KBM-7 (cell line): ENCODE measurements at regions of chr3 and their contacts with region 1.

Region 1: DNA sequence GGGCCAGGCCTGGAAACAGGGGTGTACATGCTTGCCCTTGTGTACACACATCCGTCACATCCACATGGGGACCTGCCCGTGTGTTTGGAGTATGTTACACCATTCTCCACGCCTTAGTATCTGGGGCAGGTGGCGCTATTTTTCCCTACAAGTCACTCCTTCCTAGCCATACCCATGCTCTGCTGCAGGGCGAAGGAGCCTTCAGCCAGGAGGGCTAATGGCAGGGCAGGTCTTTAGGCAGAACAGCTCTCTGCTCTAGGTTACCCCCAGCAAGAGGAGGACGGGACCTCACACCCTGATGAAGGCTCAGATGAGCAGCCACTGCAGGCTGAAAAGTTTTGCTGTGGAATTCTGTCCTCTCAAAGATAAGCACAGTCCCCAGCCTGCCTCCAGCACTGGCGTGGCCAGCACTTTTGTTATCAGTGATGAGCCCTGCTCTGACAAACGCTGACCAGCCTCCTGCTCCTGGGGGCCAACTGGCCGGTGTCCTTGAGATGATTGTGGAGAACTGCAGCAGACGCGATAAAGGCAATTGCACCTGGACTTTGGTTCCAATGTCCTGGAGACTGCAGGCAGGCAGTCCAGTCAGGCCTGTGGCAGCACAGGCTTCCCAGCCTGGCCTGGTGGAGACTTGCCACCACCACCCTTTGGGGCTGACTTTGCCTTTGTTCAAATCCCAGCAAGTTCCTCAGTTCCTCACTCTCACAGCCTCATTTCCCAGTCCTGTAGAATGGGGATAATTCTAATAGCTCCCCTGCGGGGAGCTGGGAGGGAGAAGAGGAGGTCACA is 19.8 kb upstream of the PIGZ start:
- DNase-seq: peak; percentile 31

Region 2: GRCh38 chr3:196471551-196471950 is 516.9 kb before region 1 on chr3:
- in situ Hi-C with region 1: no loop called
- DNase-seq: no peak

Region 3: GRCh38 chr3:196684548-196685407 is 303.7 kb before region 1 on chr3:
- in situ Hi-C with region 1: no loop called
- DNase-seq: peak; percentile 97

Region 4: GRCh38 chr3:197186887-197187588 is 198.6 kb after region 1 on chr3:
- in situ Hi-C with region 1: loop called (anchors 25 kb)
- DNase-seq: peak; percentile 70

Region 5: DNA sequence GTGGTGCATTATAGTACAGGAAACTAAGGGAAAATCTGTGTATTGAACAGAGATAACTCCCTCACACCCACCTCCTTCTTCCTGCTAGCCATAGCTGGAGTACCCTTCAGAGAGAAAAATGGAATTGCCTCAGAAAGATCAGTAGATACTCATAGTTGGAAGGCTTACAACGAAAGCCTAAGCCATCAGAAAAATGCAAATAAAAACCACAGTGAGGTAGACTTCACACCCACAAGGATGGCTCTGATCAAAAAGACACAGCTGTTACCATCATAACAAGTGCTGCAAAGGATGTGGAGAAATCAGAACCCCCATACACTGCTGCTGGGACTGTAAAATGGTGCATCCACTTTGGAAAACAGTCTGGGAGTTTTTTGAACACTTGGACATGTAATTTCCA is 317.4 kb after region 1 on chr3:
- in situ Hi-C with region 1: no loop called
- DNase-seq: no peak

Region 6: DNA sequence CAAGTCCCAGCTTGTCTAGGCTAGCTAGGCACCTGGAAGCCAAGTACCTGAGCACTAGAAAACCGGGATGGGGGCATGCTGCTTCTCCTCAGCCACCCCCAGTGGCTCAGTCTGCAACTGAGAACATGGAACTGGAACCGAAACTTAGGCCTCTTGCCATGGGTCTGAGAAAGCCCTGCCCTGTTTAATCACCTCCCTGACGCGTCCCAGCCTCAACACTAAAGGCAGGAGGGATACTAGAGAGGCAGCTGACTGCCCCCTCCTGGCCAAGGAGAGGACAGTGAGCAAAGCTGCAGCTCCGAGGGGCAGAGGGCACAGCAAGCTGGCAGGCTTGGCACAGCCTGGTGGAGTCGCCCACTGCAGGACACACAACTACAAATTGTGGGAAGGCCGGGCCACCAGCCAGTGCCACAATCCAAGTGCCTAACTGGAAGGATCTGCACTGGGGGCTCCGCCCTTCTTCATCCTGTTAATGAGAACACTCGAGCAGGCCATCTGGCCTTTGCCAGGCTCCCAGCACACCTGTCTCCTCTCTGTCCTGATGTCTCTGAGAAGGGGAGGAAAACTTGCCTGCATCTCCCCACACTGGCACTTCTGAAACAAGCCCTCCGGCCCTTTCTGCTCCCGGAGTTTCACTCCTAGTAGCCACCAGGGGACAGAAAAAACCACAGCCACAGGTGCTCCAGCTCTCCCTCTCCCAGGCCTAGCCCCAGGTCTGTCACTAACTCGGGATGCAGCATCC is 513.6 kb after region 1 on chr3:
- in situ Hi-C with region 1: loop called (anchors 25 kb)
- DNase-seq: peak; percentile 79